Activated CD4-positive, alpha-beta T cell treated with anti-CD3 and anti-CD28 coated beads for 36 hours (primary cell): ENCODE measurements at regions of chr3 and their contacts with region 1.

Region 1: GRCh38 chr3:10026084-10026890 is at the start of gene FANCD2:
- DNase-seq: peak; percentile 95
- ATAC-seq: peak; percentile 91
- H3K4me3 Mint-ChIP-seq: peak within 1 kb of the TSS; percentile 95
- H3K27ac Mint-ChIP-seq: peak within 1 kb of the TSS; percentile 99
- H3K4me1 Mint-ChIP-seq: peaks cover 25% of the 10 kb centered on the region
- H3K27me3 Mint-ChIP-seq: no peaks in the 10 kb centered on the region
- total RNA-seq, gene FANCD2: 86.4 to 87.7 TPM

Region 2: GRCh38 chr3:9749645-9750555 is 276.4 kb before region 1 on chr3 and contains the start of gene OGG1:
- CTCF ChIA-PET with region 1: no interaction called
- POLR2A ChIA-PET with region 1: no interaction called
- intact Hi-C with region 1: loop called in 1 of 2 experiments (anchors 1 kb)
- DNase-seq: peak; percentile 98
- ATAC-seq: peak; percentile 94
- H3K4me3 Mint-ChIP-seq: peak within 1 kb of the TSS; percentile 87
- H3K27ac Mint-ChIP-seq: peak within 1 kb of the TSS; percentile 91
- H3K4me1 Mint-ChIP-seq: peaks cover 46% of the 10 kb centered on the region
- H3K27me3 Mint-ChIP-seq: no peaks in the 10 kb centered on the region
- total RNA-seq, gene OGG1: 36.4 to 61.6 TPM

Region 3: DNA sequence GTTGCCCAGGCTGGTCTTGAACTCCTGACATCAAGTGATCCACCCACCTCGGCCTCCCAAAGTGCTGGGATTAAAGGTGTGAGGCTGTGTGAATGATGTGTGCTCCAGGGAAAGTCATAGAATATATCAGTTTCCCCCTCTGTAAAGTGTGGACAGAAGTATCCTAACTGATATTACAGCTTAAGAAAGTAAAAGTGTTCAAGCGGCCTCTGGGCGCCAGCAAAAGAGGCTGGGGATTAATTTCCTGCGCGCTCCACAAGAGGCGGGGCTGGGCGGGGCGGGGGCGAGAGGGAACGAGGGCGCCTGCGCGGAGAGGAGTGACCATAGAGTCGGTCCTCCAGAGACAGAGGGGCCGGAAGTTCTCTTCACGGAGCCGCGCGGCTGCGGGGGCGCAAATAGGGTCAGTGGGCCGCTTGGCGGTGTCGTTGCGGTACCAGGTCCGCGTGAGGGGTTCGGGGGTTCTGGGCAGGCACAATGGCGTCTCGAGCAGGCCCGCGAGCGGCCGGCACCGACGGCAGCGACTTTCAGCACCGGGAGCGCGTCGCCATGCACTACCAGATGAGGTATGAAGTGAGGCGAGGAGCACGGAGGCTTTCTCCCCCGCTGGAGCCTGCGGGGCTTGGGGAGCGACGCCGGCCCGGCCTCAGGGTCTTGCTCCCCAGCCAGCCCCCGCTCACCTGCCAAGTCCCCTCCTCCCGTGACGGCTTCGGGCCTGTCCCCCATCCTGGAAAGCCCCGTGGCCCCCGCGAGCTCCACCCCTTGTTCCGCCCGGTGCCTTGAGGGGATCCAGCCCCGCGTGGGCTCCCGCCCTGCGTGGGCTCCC is 135.8 kb before region 1 on chr3 and contains the start of gene JAGN1:
- CTCF ChIA-PET with region 1: no interaction called
- POLR2A ChIA-PET with region 1: no interaction called
- intact Hi-C with region 1: loop called in 1 of 2 experiments (anchors 1 kb)
- DNase-seq: peak; percentile 96
- ATAC-seq: peak; percentile 82
- H3K4me3 Mint-ChIP-seq: peak within 1 kb of the TSS; percentile 96
- H3K27ac Mint-ChIP-seq: peak within 1 kb of the TSS; percentile 98
- H3K4me1 Mint-ChIP-seq: peaks cover 34% of the 10 kb centered on the region
- H3K27me3 Mint-ChIP-seq: no peaks in the 10 kb centered on the region
- total RNA-seq, gene JAGN1: 27.1 to 33.0 TPM

Region 4: GRCh38 chr3:10010486-10011465 is 15.5 kb before region 1 on chr3:
- CTCF ChIA-PET with region 1: no interaction called
- POLR2A ChIA-PET with region 1: no interaction called
- intact Hi-C with region 1: loop called in 1 of 2 experiments (anchors 1 kb)
- DNase-seq: peak; percentile 92
- ATAC-seq: peak; percentile 83
- H3K4me3 Mint-ChIP-seq: peak overlapping the region; percentile 22
- H3K27ac Mint-ChIP-seq: no peak overlapping the region
- H3K4me1 Mint-ChIP-seq: peaks cover 20% of the 10 kb centered on the region
- H3K27me3 Mint-ChIP-seq: peaks cover 6% of the 10 kb centered on the region

Region 5: DNA sequence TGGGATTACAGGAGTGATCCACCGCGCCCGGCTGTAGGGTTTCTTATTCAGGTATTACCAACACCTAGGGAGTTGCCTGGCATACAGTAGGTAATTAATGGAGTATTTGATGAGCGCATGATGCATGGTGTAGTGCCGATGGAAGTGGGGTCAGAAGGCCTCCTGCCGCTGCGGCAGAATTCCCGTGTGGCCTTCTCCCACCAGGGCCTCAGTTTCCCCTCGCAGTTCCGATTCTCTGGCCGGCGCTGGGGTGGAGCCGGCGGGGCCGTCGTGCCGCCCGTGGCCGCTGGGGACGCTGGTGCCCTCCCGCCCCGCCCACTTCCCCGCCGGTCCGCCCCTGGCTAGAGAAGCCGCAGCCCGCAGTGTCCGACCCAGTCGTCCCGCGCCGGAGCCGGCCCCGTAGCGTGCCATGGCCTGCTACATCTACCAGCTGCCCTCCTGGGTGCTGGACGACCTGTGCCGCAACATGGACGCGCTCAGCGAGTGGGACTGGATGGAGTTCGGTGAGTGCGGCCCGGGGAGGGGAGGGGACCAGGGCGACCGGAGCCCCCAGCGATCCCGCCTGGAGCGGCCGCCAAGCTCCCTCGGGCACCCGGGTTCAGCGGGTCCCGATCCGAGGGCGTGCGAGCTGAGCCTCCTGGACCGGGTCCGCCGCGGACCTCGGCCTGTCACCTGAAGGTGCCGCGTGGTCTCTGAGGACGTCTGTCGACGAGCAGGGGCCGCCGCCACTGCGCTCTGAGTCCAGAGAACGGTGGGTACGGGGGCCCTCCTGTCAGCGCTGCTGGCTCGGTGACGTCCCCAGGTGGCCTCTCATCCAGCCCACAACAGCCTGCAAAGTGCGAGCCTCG is 138.5 kb after region 1 on chr3 and contains the start of gene IRAK2:
- CTCF ChIA-PET with region 1: no interaction called
- POLR2A ChIA-PET with region 1: no interaction called
- intact Hi-C with region 1: no loop called
- DNase-seq: peak; percentile 83
- ATAC-seq: peak; percentile 79
- H3K4me3 Mint-ChIP-seq: peak within 1 kb of the TSS; percentile 70
- H3K27ac Mint-ChIP-seq: peak within 1 kb of the TSS; percentile 13
- H3K4me1 Mint-ChIP-seq: peaks cover 21% of the 10 kb centered on the region
- H3K27me3 Mint-ChIP-seq: no peaks in the 10 kb centered on the region
- total RNA-seq, gene IRAK2: 3.9 to 4.0 TPM

Region 6: GRCh38 chr3:10263646-10264363 is 237.5 kb after region 1 on chr3:
- CTCF ChIA-PET with region 1: no interaction called
- POLR2A ChIA-PET with region 1: no interaction called
- intact Hi-C with region 1: loop called in 1 of 2 experiments (anchors 5 kb)
- DNase-seq: peak; percentile 86
- ATAC-seq: peak; percentile 94
- H3K4me3 Mint-ChIP-seq: peak overlapping the region; percentile 59
- H3K27ac Mint-ChIP-seq: peak overlapping the region; percentile 91
- H3K4me1 Mint-ChIP-seq: peaks cover 85% of the 10 kb centered on the region
- H3K27me3 Mint-ChIP-seq: no peaks in the 10 kb centered on the region